GM12878 (cell line): ENCODE measurements at regions of chr7 and their contacts with region 1.

Region 1: DNA sequence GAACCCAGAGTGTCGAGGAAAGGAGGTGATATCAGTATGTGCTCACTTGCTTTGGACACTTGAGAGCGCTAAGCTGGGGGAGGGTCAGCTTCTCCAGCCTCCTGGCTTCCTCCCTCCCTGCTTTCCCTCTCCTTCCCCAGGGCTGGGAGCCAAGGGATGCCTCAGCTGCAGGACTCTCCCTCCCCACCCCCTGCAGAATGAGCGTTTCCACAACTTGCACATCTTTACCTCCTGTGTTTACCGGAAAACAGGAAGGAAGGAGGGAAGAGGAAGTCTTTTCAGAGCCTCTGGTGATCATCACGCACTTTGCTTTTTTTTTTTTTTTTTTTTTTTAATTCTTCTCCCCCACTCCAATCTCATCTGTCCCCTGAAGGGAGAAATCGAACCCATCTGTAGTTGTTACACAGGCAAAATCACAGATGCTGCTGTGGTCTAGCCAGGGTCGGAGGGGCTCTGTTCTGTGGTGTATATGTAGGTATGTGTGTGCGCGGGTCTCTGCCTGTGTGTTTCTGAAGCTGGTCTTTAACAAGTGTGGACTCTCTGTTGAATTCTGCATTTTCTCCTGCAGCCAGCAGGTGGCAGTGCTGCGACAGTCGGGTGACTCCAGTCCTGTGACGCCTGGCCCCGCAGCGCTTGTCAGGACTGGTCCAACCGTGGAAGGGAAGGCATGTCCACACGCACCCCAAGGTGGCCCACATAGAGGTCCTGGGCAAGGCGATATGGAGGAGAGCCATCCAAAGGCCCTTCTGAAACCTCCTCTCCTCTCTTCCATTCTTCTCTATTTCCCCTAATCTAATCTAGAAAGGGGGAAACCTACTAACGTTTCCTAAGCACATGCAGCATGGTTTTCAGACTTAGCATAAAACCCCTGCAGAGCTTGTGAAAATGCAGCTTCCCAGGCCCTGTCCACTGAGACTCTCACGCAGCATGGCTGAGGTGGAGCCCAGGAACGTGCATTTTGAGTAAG is 257.6 kb downstream of the PLXNA4 start:
- DNase-seq: peak; percentile 9
- ATAC-seq: peak; percentile 100
- H3K4me3 ChIP-seq: no peak overlapping the region
- H3K27ac ChIP-seq: no peak overlapping the region
- H3K4me1 ChIP-seq: no peaks in the 10 kb centered on the region
- H3K27me3 ChIP-seq: peaks cover 0 to 4% of the 10 kb centered on the region in 2 experiments; a peak in 3 of 4 replicates
- CTCF ChIP-seq: peak; percentile 79 to 89 (median 88)
- EP300 ChIP-seq: no peak
- POLR2A ChIP-seq: no peak
- RAD21 ChIP-seq: peak; percentile 78

Region 2: GRCh38 chr7:132351954-132352499 is 33.4 kb after region 1 on chr7:
- CTCF ChIA-PET with region 1: no interaction called
- POLR2A ChIA-PET with region 1: no interaction called
- RAD21 ChIA-PET with region 1: no interaction called
- SMC1A ChIA-PET with region 1: no interaction called
- in situ Hi-C with region 1: no loop called
- intact Hi-C with region 1: no loop called
- DNase-seq: no peak
- ATAC-seq: no peak
- H3K4me3 ChIP-seq: no peak overlapping the region
- H3K27ac ChIP-seq: no peak overlapping the region
- H3K4me1 ChIP-seq: no peaks in the 10 kb centered on the region
- H3K27me3 ChIP-seq: peaks cover 0 to 6% of the 10 kb centered on the region in 2 experiments; a peak in 3 of 4 replicates
- CTCF ChIP-seq: no peak
- EP300 ChIP-seq: no peak
- POLR2A ChIP-seq: no peak
- RAD21 ChIP-seq: no peak

Region 3: GRCh38 chr7:132380059-132380458 is 61.4 kb after region 1 on chr7:
- CTCF ChIA-PET with region 1: no interaction called
- POLR2A ChIA-PET with region 1: no interaction called
- RAD21 ChIA-PET with region 1: no interaction called
- SMC1A ChIA-PET with region 1: no interaction called
- in situ Hi-C with region 1: no loop called
- intact Hi-C with region 1: no loop called
- DNase-seq: no peak
- ATAC-seq: no peak
- H3K4me3 ChIP-seq: no peak overlapping the region
- H3K27ac ChIP-seq: no peak overlapping the region
- H3K4me1 ChIP-seq: no peaks in the 10 kb centered on the region
- H3K27me3 ChIP-seq: peaks cover 0 to 2% of the 10 kb centered on the region in 2 experiments; a peak in 2 of 4 replicates
- CTCF ChIP-seq: no peak
- EP300 ChIP-seq: no peak
- POLR2A ChIP-seq: no peak
- RAD21 ChIP-seq: no peak

Region 4: GRCh38 chr7:132569884-132570614 is 251.4 kb after region 1 on chr7:
- CTCF ChIA-PET with region 1: interaction called, 3 read pairs
- POLR2A ChIA-PET with region 1: no interaction called
- RAD21 ChIA-PET with region 1: no interaction called
- SMC1A ChIA-PET with region 1: no interaction called
- in situ Hi-C with region 1: loop called (anchors 5 kb)
- intact Hi-C with region 1: no loop called
- DNase-seq: no peak
- ATAC-seq: no peak
- H3K4me3 ChIP-seq: no peak overlapping the region
- H3K27ac ChIP-seq: no peak overlapping the region
- H3K4me1 ChIP-seq: no peaks in the 10 kb centered on the region
- H3K27me3 ChIP-seq: peaks cover 12 to 15% of the 10 kb centered on the region in 2 experiments
- CTCF ChIP-seq: no peak
- EP300 ChIP-seq: no peak
- POLR2A ChIP-seq: no peak
- RAD21 ChIP-seq: no peak

Region 5: GRCh38 chr7:133344275-133344674 is 1025.6 kb after region 1 on chr7:
- CTCF ChIA-PET with region 1: no interaction called
- POLR2A ChIA-PET with region 1: no interaction called
- RAD21 ChIA-PET with region 1: no interaction called
- SMC1A ChIA-PET with region 1: no interaction called
- in situ Hi-C with region 1: no loop called
- intact Hi-C with region 1: loop called (anchors 5 kb)
- DNase-seq: no peak
- ATAC-seq: no peak
- H3K4me3 ChIP-seq: no peak overlapping the region
- H3K27ac ChIP-seq: no peak overlapping the region
- H3K4me1 ChIP-seq: no peaks in the 10 kb centered on the region
- H3K27me3 ChIP-seq: no peaks in the 10 kb centered on the region
- CTCF ChIP-seq: peak; percentile 26 to 49 (median 33); a peak in 5 of 6 replicates
- EP300 ChIP-seq: no peak
- POLR2A ChIP-seq: no peak
- RAD21 ChIP-seq: peak; percentile 50

Region 6: DNA sequence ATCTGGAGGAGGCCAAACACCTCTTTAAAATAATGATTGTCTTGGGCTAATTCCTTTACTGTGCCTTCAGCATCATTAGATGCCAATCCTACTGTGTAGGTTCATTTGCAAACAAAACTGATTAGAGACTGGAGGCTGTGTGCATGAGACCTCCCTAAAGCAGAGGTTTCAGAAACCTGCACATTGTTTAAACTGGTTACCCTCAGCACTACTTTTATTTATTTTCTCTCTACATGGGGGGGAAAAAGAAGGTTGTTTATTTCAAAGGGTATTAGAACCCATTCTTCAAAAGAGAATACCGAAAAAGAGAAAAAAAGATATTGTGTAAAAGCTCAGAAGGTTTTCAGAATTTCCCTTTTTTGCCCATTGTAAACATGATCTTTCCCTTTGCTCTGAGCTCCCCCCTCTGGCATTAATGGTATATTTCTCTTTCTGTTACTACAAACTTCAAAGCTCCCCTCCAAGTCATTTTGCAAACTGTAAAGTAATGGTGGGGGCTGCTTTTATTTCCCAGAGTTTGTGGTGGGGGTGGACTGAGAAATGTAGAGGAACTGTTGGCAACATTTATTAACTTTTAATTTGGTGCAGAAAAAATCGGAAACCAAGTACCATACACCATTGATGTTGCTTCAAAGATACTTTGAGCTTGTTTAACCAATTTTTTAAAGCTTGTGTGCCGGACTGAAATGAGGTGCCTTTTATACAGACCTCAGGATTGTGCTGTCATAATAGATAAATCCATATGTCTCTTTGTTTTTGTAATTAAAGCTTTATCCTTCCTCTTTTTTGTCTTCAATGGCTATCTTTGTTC is 1115.6 kb after region 1 on chr7:
- CTCF ChIA-PET with region 1: interaction called, 12 read pairs
- POLR2A ChIA-PET with region 1: no interaction called
- RAD21 ChIA-PET with region 1: interaction called, 8 read pairs
- SMC1A ChIA-PET with region 1: no interaction called
- in situ Hi-C with region 1: loop called (anchors 25 kb)
- intact Hi-C with region 1: loop called (anchors 2 kb)
- DNase-seq: no peak
- ATAC-seq: peak; percentile 68
- H3K4me3 ChIP-seq: no peak overlapping the region
- H3K27ac ChIP-seq: no peak overlapping the region
- H3K4me1 ChIP-seq: no peaks in the 10 kb centered on the region
- H3K27me3 ChIP-seq: no peaks in the 10 kb centered on the region
- CTCF ChIP-seq: peak; percentile 34 to 67 (median 45); a peak in 5 of 6 replicates
- EP300 ChIP-seq: no peak
- POLR2A ChIP-seq: no peak
- RAD21 ChIP-seq: peak; percentile 87